HEK293 (cell line): ENCODE measurements at regions of chr17 and their contacts with region 1.

Region 1: GRCh38 chr17:41930009-41930832 is at the start of gene ODAD4:
- H3K4me3 ChIP-seq: peak within 1 kb of the TSS; percentile 59
- H3K27ac ChIP-seq: peak within 1 kb of the TSS; percentile 54
- H3K4me1 ChIP-seq: peaks cover 4% of the 10 kb centered on the region; the same call in 1 of the 2 replicates
- CTCF ChIP-seq: peak; percentile 90

Region 2: GRCh38 chr17:41864836-41865595 is 65.2 kb before region 1 on chr17 and contains the start of gene KLHL11:
- CTCF ChIA-PET with region 1: no interaction called
- POLR2A ChIA-PET with region 1: interaction called, 11 read pairs
- H3K4me3 ChIP-seq: peak within 1 kb of the TSS; percentile 96
- H3K27ac ChIP-seq: peak within 1 kb of the TSS; percentile 91
- H3K4me1 ChIP-seq: peaks cover 21% of the 10 kb centered on the region
- CTCF ChIP-seq: no peak; the same call in 1 of the 2 replicates

Region 3: DNA sequence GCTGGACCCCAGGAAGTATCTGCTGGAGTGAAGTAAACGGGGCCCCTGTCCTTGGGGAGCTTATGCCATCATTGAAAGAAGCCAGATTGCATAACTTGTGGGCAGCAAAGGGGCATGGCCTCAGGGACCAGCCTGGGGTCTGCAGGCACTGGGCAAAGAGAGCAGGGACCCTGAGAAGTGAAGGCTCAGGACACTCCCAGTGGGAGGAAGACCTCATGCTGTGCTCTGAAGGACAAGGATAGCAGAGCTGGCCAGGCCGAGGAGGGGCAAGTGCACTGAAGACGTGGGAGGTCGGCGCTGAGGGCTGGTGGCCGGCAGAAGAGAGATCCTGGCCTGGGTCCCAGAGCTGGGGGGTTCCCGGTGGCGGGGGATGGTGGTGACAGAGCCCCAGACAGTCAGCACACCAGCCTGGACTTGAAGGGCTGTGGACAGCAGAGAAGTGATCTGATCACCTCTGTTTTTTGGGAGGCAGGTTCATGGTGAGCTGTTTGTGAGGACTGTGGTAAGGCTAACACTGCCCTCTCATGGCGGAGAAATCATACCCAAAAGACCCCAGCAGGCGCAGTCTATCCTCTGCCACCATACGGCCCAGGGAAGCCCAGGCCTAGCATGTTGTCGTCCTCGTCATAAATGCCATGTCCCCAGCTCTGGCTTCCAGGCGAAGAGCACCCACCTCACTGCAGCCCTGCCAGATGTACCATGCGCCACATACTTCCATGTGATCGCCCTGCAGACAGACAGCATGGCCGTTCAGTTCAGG is 29.3 kb after region 1 on chr17:
- CTCF ChIA-PET with region 1: interaction called, 26 read pairs
- POLR2A ChIA-PET with region 1: interaction called, 5 read pairs
- H3K4me3 ChIP-seq: no peak overlapping the region
- H3K27ac ChIP-seq: 0 out of 2 replicates have a peak overlapping the region, but pooled peaks have one; percentile 4
- H3K4me1 ChIP-seq: peaks cover 4% of the 10 kb centered on the region; the same call in 1 of the 2 replicates
- CTCF ChIP-seq: peak; percentile 65

Region 4: DNA sequence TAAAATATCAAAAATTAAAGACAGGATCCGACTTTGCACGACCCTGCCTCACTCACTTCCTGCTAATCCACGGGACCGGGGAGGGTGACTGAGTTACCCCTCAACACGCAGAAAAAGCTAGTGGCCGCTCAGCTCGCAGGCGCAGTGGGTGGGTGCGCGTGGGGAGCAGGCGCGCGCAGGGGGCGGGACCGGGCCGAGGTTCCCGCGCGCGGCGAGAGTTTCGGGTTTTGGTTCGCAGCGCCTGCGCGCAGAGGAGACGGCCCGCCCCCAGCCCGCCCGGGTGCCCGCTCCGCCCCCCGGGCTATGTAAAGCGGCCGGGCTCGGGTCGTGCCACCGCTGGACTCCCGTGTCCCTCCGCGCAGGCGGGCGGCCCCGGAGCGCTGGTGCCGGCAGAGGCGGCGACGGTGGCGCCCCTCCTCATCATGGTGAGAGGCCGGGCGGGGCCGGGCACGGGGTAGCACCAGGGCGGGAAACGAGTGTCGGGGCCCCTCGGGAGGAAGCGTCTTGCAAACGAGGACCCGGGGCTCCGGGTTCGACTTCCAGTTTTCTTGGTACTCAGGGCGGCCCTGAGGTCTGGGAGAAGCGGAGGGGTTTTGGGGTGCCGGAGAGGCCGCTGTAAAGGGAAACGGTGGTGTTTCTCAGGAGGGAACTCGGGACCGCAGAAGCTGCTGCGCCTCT is 36.4 kb after region 1 on chr17 and contains the start of gene CNP:
- CTCF ChIA-PET with region 1: interaction called, 7 read pairs
- POLR2A ChIA-PET with region 1: interaction called, 12 read pairs
- H3K4me3 ChIP-seq: peak within 1 kb of the TSS; percentile 76
- H3K27ac ChIP-seq: peak within 1 kb of the TSS; percentile 89
- H3K4me1 ChIP-seq: 0 out of 2 replicates have a peak, but pooled peaks cover 4% of the 10 kb centered on the region
- CTCF ChIP-seq: no peak

Region 5: DNA sequence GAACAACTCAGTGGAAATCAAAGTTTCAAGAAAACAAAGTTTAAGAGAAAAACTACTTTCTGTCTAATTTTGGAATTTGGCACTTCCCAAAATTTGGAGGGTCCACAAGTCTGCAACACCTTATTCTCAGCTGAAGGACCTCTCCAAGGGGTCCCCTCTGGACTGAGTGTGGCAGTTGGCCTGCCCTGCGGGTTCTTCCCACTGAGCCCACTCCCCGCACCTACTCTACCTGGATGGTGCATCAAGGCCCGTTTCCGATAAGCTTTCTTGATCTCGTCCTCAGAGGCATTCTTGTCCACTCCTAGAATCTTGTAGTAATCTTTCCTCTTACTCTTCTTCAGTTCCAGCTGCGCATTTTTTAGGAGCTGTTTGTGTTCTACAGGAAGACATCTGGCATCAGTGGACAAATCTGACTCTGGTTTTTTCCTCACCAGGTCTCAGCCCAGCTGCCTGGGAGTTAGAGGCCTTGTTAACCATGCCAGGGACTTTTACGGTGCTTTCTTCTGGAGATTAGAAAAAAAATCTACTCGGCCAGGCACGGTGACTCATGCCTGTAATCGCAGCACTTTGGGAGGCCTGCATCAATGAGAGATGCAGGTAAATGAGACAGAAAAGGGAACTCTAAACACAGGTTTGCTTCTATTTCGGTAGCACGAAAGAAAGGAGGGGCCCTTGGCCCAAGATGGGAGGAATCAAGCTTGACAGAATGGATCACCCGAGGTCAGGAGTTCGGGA is 52.0 kb after region 1 on chr17:
- CTCF ChIA-PET with region 1: no interaction called
- POLR2A ChIA-PET with region 1: no interaction called
- H3K4me3 ChIP-seq: no peak overlapping the region
- H3K27ac ChIP-seq: no peak overlapping the region
- H3K4me1 ChIP-seq: no peaks in the 10 kb centered on the region
- CTCF ChIP-seq: no peak